Heart right ventricle (tissue), 16 donors: ENCODE measurements at regions of chrX and their contacts with region 1.

Region 1: DNA sequence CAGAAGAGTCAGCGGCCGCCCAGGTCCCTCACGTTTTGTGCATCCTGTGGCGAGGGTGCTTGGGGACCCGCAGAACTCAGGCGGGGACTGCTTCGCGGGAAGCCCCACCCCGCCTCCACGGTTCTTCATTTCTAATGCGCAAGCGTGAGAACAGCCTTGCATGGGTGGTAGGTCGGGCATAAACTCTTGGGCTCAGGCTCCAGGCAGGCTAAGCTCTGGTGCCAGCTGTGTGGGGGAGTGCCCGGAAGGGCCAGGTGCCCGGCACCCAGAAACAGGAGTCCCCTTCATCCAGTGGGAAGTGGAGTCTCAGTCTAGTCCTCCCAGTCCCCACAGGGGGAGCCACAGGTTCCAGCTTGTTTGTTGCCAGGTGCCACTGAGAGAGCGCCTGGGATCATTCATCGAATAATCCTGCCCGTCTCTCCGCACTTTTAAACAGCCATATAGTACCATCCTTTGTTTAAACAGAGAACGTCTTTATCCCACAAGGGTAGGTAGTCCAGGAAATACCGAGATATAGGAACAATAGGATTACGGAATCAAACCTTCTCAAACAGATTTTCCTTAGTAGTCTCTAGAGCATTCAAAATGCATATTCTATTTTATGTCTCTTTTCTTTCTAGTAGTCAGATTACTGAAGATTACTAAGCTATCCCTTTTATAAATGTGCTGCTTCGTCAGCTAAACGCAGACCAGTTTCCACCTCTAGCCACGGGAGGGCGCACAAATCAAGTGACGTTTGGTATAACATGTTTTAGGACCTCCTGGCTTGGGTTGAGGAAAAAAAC is 12.7 kb upstream of the RBBP7 start:
- DNase-seq: peak; percentile 47 to 55
- ATAC-seq: peak; percentile 74 to 90 (median 86)
- H3K4me3 ChIP-seq: peak overlapping the region; percentile 28 to 62 (median 52)
- H3K27ac ChIP-seq: peak overlapping the region in 8 of 10 donors; percentile 4 to 65 (median 56)
- H3K4me1 ChIP-seq: peaks cover 0 to 5% (median 0%) of the 10 kb centered on the region in 9 donors
- H3K27me3 ChIP-seq: peaks cover 0 to 98% (median 0%) of the 10 kb centered on the region in 7 donors
- CTCF ChIP-seq: peak in 8 of 9 donors; percentile 33 to 70 (median 60)

Region 2: DNA sequence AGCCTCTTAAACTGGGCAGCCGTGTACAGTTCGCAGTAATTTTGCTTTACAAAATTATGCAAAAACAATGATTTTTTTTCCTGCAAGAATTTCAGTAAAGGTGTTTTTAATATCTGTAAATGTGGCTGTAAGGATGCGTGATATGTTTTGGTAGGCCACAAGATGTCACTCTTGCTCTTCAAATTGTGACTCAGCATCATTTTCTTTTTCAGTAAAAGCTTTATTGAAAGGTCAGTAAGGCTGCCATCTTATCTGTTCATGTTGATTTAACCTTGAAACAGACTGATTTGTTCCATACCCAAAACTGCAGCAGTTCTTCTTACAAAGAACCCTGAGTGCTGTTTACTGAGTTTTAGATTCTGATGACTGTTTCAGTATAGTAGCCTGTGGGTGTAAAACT is 56.7 kb before region 1 on chrX:
- intact Hi-C with region 1: loop called in 4 of 10 experiments (anchors 5 to 10 kb)
- DNase-seq: no peak
- ATAC-seq: peak in 1 of 8 donors; percentile 27
- H3K4me3 ChIP-seq: no peak overlapping the region
- H3K27ac ChIP-seq: peak overlapping the region in 1 of 10 donors; percentile 31
- H3K4me1 ChIP-seq: peaks cover 0 to 12% (median 3%) of the 10 kb centered on the region in 9 donors
- H3K27me3 ChIP-seq: peaks cover 0 to 4% (median 0%) of the 10 kb centered on the region in 7 donors
- CTCF ChIP-seq: peak in 8 of 9 donors; percentile 13 to 64 (median 54)

Region 3: GRCh38 chrX:16836371-16836770 is 46.5 kb before region 1 on chrX:
- intact Hi-C with region 1: loop called in 2 of 10 experiments (anchors 5 to 10 kb)
- DNase-seq: no peak
- ATAC-seq: peak in 2 of 8 donors; percentile 31 to 36
- H3K4me3 ChIP-seq: no peak overlapping the region
- H3K27ac ChIP-seq: no peak overlapping the region
- H3K4me1 ChIP-seq: peaks cover 0 to 22% (median 5%) of the 10 kb centered on the region in 9 donors
- H3K27me3 ChIP-seq: no peaks in the 10 kb centered on the region
- CTCF ChIP-seq: peak in 6 of 9 donors; percentile 9 to 37 (median 14)

Region 4: DNA sequence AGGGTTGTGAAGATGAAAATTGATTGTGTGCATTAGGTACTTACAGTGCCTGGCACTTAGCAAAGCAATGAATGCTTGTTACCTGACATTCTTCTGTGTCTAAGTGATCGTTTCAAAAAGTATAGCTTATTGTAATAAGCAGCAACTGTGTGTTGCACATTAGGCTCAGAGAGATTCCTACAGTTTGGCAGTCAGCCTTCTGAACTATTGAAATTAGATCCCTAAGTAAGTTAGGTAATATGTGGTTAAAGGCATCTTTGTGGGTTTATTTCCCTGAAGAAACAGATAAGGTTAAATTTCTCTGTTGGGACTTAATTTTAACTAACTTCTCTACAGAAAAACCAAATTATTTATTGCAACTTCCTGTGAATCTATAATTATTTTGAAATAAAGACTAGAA is 156.9 kb after region 1 on chrX:
- intact Hi-C with region 1: loop called in 8 of 10 experiments (anchors 5 to 10 kb)
- DNase-seq: no peak
- ATAC-seq: no peak
- H3K4me3 ChIP-seq: no peak overlapping the region
- H3K27ac ChIP-seq: no peak overlapping the region
- H3K4me1 ChIP-seq: peaks cover 0 to 7% (median 2%) of the 10 kb centered on the region in 9 donors
- H3K27me3 ChIP-seq: peaks cover 0 to 21% (median 0%) of the 10 kb centered on the region in 7 donors
- CTCF ChIP-seq: no peak

Region 5: DNA sequence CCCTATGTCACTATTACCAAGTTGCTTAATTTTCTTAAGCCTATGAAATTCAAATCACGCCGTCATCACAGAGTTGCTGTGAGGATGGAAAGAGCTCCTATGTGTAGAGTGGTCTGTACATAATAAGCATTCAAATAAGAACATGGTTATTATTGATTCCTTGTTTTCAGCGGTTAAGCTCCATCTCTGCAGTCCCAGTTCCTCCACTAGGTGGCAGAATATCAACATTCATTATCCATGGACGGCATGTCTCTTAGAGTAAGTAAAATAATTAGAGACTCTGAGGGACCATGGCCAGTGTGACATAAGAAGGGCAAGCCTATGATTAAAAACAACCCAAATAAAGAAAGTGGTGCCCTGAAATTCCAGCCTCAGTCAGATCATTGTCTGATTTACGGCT is 359.6 kb after region 1 on chrX:
- intact Hi-C with region 1: no loop called
- DNase-seq: peak in 1 of 2 donors; percentile 28
- ATAC-seq: peak in 2 of 8 donors; percentile 47 to 60
- H3K4me3 ChIP-seq: no peak overlapping the region
- H3K27ac ChIP-seq: no peak overlapping the region
- H3K4me1 ChIP-seq: no peaks in the 10 kb centered on the region
- H3K27me3 ChIP-seq: peaks cover 0 to 16% (median 0%) of the 10 kb centered on the region in 7 donors
- CTCF ChIP-seq: peak; percentile 43 to 82 (median 70)